Posterior vena cava (tissue), 2 donors: ENCODE measurements at regions of chr22 and their contacts with region 1.

Region 1: DNA sequence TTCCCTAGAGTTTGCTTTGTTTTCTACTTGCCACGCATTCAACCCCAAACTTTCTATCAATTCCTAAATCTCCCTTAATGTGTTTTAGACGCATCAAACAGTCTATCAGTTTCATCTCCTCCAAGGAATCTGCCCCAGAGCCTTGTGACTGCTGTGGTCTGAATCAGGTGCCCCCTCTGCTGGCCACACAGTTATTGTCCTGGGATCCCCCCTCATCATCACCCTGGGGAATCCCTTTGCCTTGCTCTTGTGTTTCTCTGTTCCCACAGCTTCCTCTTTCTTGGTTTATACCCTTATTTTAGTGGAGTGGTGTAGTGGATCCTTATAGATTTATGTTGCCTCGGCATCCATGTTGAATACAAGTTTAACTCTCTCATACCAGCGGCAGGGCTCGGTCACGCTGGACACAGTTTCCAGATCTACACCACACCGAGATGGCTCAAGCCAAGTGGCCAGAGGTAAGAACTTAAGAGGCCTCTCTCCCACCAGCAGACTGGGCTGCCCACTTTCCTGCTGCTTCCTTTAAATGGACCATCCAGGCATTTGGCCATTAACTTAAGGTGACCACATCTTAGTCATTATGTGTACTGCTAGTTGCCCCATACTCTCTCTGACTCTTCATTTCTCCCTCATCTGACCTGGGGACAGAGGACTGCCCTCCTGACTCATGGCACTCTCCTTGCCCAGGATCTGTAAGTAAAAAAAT is 8.2 kb downstream of the UPB1 start:
- DNase-seq: peak; percentile 83

Region 2: GRCh38 chr22:24423519-24424000 is 79.7 kb before region 1 on chr22:
- intact Hi-C with region 1: loop called in 1 of 2 experiments (anchors 5 kb)
- DNase-seq: peak; percentile 92

Region 3: GRCh38 chr22:24474221-24474620 is 29.1 kb before region 1 on chr22:
- intact Hi-C with region 1: no loop called
- DNase-seq: no peak

Region 4: GRCh38 chr22:24996420-24996952 is 493.2 kb after region 1 on chr22:
- intact Hi-C with region 1: no loop called
- DNase-seq: no peak